ENCODE measurements at regions of chr12 and their contacts with region 1.

Region 1: DNA sequence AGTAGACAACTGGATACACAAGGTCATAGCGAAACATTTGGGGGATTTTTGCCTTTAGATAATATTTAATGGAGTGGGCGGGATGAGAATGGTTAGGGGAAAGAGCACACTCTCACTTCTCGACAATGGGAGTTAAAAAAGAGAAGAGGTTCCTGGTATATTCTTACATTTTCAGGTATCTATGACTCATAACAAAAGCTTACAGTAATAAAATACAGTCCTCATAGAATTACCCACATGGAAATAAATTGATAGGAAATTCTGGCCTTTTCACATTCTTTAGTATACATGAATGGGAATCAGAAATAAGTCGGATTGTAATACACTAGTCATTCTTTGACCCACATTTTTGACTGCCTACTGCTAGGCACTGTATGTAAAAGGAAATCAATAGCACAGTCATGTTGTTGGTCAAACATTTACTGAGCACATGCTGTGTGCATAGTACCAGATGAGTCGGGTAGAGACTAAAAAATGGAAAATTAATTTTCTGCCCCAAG is 8.2 kb upstream of the CRADD start:
- DNase-seq: no peak
- ATAC-seq: no peak
- H3K4me3 ChIP-seq: no peak overlapping the region
- H3K27ac ChIP-seq: no peak overlapping the region
- H3K4me1 ChIP-seq: no peaks in the 10 kb centered on the region
- H3K27me3 ChIP-seq: no peaks in the 10 kb centered on the region

Region 2: GRCh38 chr12:93591137-93591868 is 77.7 kb before region 1 on chr12:
- intact Hi-C with region 1: loop called in 1 of 4 experiments (anchors 10 kb)
- DNase-seq: peak; percentile 88 to 95 (median 93)
- ATAC-seq: peak; percentile 98
- H3K4me3 ChIP-seq: peak overlapping the region; percentile 32
- H3K27ac ChIP-seq: peak overlapping the region; percentile 64
- H3K4me1 ChIP-seq: peaks cover 1% of the 10 kb centered on the region
- H3K27me3 ChIP-seq: no peaks in the 10 kb centered on the region